PC-9 (cell line): ENCODE measurements at regions of chr12 and their contacts with region 1.

Region 1: DNA sequence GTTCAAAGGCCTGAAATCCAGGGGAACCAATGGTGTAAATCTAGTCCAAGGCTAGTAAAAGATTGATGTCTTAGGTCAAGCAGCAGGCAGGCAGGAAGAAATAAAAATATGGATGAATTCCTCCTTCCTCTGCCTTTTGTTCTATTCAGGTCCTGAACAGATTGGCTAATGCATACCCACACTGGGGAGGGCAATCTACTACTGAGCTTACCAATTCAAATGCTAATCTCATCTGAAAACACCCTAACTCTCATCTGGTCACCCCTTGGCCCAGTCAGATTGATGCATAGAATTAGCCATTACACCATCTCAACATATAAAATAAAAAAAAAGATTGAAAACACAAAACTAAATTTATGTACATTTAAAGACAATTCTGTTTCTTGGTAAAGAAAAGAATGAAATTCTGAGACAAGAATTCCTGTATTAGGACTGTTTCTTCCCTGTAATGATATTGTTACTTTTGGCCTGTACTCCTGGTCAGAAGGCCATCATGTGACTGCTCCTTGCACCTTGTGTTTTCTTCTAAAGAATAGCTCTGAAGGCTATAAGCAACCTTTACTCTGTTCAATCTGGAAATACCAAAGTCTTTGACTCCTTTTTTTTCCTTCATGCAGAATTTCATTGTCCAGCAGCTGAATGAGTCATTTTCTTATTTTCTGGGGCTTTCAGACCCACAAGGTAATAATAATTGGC is 19.9 kb downstream of the CLEC6A start:
- DNase-seq: no peak
- H3K4me3 ChIP-seq: no peak overlapping the region
- H3K27ac ChIP-seq: no peak overlapping the region
- H3K4me1 ChIP-seq: no peaks in the 10 kb centered on the region
- H3K27me3 ChIP-seq: 0 out of 2 replicates have a peak, but pooled peaks cover 4% of the 10 kb centered on the region
- CTCF ChIP-seq: no peak

Region 2: DNA sequence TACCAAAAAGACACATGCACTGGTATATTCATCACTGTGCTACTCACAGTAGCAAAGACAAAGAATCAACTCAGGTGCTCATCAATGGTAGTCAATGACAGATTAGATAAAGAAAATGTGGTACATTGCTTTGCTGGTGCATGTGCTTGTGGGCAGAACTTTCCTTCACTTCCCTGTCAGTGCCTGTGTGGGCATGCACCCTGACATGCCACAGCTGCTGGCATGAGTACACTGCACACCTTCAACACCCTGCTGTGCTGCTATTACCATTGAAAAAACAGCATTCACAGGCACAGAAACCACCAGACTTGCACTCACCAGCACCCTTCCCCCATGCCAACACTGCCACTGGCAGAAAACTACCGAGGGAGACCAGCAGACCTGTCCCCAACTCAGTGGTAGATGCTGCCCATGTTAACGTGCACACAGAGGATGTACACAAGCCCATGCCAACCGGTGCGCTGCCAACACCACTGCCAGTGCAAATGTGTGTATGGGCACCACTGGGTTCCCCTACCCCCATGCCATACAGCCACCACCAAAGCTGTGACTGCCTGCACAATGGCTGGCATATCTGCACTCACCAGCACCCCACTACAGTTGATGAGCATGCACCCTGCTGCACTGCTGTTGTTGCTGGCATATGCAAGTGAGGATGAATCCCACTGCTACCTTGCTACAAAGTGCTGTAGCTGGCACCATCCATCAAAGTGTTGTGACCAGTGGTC is 867.3 kb before region 1 on chr12:
- CTCF ChIA-PET with region 1: no interaction called
- POLR2A ChIA-PET with region 1: interaction called, 11 read pairs
- intact Hi-C with region 1: no loop called
- DNase-seq: no peak
- H3K4me3 ChIP-seq: no peak overlapping the region
- H3K27ac ChIP-seq: no peak overlapping the region
- H3K4me1 ChIP-seq: no peaks in the 10 kb centered on the region
- H3K27me3 ChIP-seq: no peaks in the 10 kb centered on the region
- CTCF ChIP-seq: no peak

Region 3: DNA sequence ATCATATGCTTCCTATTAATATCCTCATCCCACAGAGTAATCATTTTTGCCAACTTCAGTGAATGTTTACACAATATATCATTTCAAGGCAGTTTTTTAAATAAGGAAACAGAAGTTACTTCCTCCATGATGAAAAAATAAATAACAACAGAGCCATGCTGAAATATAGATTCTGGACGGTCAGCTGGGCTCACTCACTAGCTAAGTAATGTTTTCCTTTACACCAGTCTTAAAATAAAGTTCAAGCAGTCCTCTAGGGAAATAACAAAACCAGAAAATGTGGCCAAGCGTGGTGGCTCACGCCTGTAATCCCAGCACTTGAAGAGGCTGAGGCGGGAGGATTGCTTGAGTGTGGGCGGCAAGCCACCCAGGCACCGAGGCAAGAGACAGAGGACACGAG is 108.3 kb after region 1 on chr12:
- CTCF ChIA-PET with region 1: no interaction called
- POLR2A ChIA-PET with region 1: no interaction called
- intact Hi-C with region 1: no loop called
- DNase-seq: no peak
- H3K4me3 ChIP-seq: no peak overlapping the region
- H3K27ac ChIP-seq: no peak overlapping the region
- H3K4me1 ChIP-seq: no peaks in the 10 kb centered on the region
- H3K27me3 ChIP-seq: peaks cover 7% of the 10 kb centered on the region; the same call in 1 of the 2 replicates
- CTCF ChIP-seq: no peak

Region 4: DNA sequence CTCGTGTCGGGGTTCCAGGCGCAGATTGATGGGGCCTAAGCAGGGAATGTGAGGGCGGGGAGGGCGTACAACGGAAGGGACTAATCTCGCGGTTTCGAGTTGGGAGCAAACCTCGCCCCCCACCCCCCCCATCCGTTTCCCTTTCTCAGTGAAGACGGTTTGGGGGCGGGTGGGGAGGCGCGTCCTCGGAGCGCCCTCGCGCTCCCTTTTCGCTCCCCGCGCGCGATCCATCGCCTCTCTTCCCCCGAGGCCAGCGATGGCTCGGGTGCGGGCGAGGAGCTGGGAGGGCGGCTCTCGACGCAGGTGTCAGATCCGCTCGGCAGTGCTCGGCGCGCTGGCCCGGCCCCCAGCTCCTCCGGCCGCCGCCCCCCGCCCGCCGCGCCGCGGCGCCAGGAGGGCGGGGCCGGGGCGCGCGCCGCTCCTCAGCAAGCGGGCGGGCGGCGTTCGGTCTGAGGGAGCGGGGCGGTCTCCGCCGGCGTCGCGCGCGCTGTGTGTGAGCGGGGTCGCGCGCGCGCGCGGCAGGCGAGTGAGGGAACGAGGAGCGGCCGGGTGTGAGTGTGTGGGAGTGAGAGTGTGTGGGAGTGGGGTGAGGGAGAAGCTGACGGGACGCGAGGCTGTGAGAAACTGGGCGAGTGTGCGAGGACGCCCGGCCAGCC is 221.9 kb after region 1 on chr12 and contains the start of gene RIMKLB:
- CTCF ChIA-PET with region 1: no interaction called
- POLR2A ChIA-PET with region 1: no interaction called
- intact Hi-C with region 1: no loop called
- DNase-seq: peak in 1 of 2 experiments; percentile 82
- H3K4me3 ChIP-seq: peak within 1 kb of the TSS; percentile 92
- H3K27ac ChIP-seq: peak within 1 kb of the TSS; percentile 43
- H3K4me1 ChIP-seq: peaks cover 16% of the 10 kb centered on the region
- H3K27me3 ChIP-seq: no peaks in the 10 kb centered on the region
- CTCF ChIP-seq: no peak
- total RNA-seq, gene RIMKLB: 56.9 and 64.8 TPM in 2 replicates